ENCODE measurements at regions of chr11 and their contacts with region 1.

Region 1: GRCh38 chr11:14182833-14183364 is 176.1 kb downstream of the RRAS2 start:
- DNase-seq: no peak

Region 2: DNA sequence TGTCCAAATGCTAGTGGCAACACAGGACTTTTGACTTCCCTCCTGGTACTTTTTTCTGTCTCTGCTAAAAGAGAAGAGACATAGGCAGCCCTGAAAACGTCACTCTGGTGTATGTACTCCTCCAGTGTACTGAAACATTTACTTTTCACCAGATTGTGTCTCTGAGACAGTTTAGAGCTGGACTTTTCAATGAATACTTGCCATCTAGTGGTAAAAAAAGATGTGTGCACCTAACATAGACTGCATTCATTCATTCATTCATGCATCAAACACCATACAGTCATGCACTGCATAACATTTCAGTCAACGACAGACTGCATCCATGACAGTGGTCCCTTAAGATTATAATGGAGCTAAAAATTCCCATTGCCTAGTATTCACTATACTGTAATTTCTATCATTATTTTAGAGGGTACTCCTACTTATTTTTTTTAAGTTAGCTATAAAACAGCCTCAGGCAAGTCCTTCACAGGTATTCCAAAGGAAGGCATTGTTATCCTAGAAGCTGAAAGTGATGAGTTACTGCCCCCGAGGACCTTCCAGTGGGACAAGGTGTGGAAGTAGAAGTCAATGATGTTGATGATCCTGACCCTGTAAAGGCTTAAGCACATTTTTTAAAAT is 34.1 kb before region 1 on chr11:
- intact Hi-C with region 1: loop called in 1 of 2 experiments (anchors 1 kb)
- DNase-seq: no peak

Measured in posterior vena cava (tissue), 2 donors.